ENCODE measurements at regions of chr10 and their contacts with region 1.

Region 1: DNA sequence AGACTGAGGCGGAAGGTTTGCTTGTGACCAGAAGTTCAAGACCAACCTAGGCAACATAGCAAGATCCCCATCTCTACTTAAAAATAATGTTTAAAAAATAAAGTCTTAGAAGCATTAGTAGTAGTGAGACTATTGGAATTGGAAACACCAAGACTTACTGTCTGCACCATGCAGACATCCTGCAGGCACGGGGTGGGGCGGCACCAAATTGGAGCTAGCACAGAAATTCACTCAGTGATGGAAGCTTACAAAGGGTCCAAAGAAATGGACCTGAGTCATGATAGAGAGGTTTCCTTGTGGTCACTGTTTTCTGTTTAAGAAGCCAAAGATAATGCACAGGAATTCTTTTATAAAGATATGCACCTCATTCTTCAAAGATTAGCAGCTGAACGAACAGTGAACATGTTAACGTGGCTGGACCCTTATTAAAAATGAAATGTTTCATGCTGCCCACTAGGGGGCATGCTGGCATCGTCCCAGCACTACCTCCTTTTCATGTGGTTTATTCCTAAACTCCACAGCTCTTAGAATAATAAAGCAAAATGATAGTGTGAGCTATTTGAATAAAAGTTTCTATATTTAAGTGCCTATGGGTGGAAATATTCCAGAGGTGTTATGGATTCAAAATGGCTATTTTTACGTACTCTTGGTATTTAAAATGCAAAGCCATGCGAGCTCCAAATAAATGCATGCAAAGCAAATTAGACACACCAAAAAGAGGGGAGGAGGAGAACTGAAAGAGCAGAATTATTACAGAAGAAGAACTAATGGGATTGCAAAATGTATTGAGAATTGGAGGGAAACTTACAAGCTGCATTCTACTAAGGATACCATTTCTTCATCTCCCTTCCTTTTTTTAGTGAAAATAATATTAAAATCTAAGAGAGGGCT is 28.6 kb downstream of the PDSS1 start:
- DNase-seq: no peak
- H3K4me3 ChIP-seq: no peak overlapping the region
- H3K27ac ChIP-seq: no peak overlapping the region
- H3K4me1 ChIP-seq: no peaks in the 10 kb centered on the region
- H3K27me3 ChIP-seq: no peaks in the 10 kb centered on the region
- CTCF ChIP-seq: peak; percentile 69 to 83

Region 2: GRCh38 chr10:26829810-26830515 is 103.9 kb after region 1 on chr10:
- intact Hi-C with region 1: no loop called
- DNase-seq: no peak
- H3K4me3 ChIP-seq: no peak overlapping the region
- H3K27ac ChIP-seq: no peak overlapping the region
- H3K4me1 ChIP-seq: peaks cover 0 to 16% (median 0%) of the 10 kb centered on the region in 4 donors
- H3K27me3 ChIP-seq: no peaks in the 10 kb centered on the region
- CTCF ChIP-seq: no peak

Region 3: DNA sequence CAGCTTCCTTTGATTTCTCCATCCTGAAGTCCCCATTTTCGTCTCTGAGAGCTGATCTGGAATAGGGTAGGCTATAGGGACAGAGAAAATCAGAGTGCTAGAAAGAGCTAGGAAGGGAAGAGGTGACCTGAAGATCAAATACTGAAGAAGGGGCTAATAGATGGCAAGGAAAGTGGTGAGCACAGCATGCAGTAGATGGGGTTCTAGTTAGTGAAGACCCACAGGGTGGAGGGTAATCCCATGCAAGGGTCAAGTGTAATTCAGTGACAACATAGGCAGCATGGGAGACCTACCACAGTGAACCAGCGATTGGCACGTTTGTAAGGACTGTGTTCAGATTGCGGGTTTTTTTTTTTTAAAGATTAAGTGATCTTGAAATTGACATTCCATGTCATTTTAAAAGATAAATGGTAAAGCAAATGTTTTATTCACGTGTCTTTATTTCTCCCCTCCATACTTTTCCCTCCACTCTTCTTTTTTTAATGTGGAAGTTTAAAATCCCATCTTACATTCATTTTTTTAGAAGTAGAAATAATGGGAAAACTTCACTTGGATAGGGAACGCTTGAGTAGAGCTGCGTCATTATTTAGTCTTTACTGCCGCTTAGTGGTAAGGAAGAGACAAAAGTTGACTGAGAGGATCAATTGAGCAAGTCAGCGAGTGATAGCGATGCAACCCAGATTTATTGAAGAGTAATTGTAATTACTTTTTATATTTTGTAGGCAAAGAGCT is 155.7 kb after region 1 on chr10:
- intact Hi-C with region 1: loop called (anchors 5 kb)
- DNase-seq: no peak
- H3K4me3 ChIP-seq: no peak overlapping the region
- H3K27ac ChIP-seq: no peak overlapping the region
- H3K4me1 ChIP-seq: no peaks in the 10 kb centered on the region
- H3K27me3 ChIP-seq: peaks cover 0 to 22% of the 10 kb centered on the region in 2 donors
- CTCF ChIP-seq: peak; percentile 52 to 77